IMR-90 (cell line): ENCODE measurements at regions of chr1 and their contacts with region 1.

Region 1: DNA sequence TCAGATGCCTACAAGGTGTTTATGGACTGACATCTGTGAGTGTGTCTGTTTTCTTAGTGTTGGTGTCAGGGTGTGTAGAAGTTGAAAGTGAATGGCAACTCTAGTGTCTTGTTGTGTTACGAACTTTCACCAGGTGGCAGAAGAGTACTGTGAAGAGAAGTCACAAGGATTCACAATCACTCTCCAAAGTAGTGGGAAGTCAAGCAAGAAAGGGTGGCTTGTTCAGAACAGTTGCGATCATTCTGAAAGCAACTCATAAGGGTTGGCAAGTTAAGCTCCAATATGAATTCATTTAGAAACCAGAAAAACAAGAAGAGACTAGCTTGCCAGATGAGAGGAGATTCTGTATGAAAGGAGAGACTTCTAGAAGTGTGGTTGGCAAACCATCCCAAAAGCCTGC is 86.1 kb downstream of the FASLG start:
- DNase-seq: peak; percentile 89
- ATAC-seq: peak; percentile 69
- H3K4me3 ChIP-seq: no peak overlapping the region
- H3K27ac ChIP-seq: no peak overlapping the region
- H3K4me1 ChIP-seq: peaks cover 7% of the 10 kb centered on the region
- H3K27me3 ChIP-seq: no peaks in the 10 kb centered on the region; the same call in 1 of the 2 replicates
- CTCF ChIP-seq: peak; percentile 85
- POLR2A ChIP-seq: peak; percentile 48; the same call in 1 of the 2 replicates
- RAD21 ChIP-seq: peak; percentile 94

Region 2: DNA sequence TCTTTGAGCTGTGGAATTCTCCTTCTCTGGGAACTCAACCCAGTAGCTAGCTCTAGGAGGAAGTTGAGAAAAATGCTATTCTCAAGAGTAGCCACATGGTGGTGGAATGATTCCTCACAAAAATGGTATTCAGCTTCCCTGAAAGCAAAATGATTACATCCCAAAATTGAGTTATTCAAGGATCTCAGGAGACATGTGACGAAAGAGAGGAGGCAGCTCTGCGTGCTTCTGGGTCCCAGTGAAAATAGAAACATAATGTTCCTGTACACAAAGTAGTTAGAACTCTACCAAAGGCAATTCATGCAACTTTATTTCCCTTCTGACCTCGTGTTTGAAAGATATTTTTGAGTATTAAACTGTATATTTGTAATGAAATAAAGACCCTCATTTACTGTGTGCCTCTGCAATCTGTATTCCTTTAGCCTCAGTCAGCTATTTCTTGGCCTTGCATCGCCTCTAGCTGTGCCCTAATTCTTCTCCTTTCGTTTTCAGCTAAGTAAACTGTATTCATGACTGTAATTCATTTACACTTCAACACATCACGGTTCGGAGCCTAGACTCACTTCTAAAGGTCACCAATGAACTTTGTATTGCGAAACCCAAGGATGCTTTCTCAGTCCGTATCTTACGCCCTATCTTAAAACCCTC is 81.2 kb after region 1 on chr1:
- CTCF ChIA-PET with region 1: interaction called, 18 read pairs
- POLR2A ChIA-PET with region 1: no interaction called
- dilution Hi-C with region 1: no loop called
- in situ Hi-C with region 1: loop called (anchors 5 kb)
- intact Hi-C with region 1: loop called (anchors 1 kb)
- DNase-seq: peak; percentile 95
- ATAC-seq: peak; percentile 82
- H3K4me3 ChIP-seq: no peak overlapping the region
- H3K27ac ChIP-seq: peak overlapping the region; percentile 76
- H3K4me1 ChIP-seq: peaks cover 11% of the 10 kb centered on the region
- H3K27me3 ChIP-seq: no peaks in the 10 kb centered on the region
- CTCF ChIP-seq: peak; percentile 81
- POLR2A ChIP-seq: peak; percentile 27; the same call in 1 of the 2 replicates
- RAD21 ChIP-seq: peak; percentile 94

Region 3: DNA sequence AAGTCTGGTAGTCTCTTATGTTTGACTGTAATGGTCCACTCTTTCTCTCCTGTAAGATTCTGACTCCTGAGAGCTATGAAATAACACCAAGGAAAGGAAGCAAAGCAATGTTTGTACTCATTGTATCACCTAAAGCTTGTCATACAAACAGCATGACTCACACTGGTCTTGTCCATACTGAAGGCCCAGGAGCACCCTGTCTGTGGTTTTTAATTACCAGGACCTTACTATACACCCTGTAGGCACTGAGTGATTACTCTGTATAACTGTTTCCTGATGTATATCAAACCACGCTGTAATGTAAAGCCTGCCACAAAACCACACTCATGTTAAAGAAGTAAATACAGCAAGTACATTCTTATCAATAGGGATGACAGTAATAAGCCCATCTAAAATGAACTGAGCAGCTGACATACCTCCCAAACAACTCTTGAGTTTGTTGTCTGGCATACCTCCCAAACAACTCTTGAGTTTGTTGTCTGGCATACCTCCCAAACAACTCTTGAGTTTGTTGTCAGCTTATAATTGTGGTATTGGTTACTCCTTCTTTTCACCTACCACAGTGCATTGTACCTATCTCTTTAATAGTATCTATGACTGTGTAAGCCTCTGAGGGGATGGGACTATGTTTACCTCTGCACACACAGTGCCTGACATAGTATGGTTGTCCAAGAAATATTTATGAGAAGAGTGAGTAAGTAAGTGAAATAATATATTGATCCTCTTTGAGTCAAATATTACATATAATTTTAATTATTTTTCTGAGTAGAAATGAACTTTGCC is 317.3 kb after region 1 on chr1:
- CTCF ChIA-PET with region 1: no interaction called
- POLR2A ChIA-PET with region 1: no interaction called
- dilution Hi-C with region 1: no loop called
- in situ Hi-C with region 1: no loop called
- intact Hi-C with region 1: loop called (anchors 5 kb)
- DNase-seq: peak; percentile 80
- ATAC-seq: peak; percentile 80
- H3K4me3 ChIP-seq: no peak overlapping the region
- H3K27ac ChIP-seq: no peak overlapping the region
- H3K4me1 ChIP-seq: peaks cover 8% of the 10 kb centered on the region; the same call in 1 of the 2 replicates
- H3K27me3 ChIP-seq: no peaks in the 10 kb centered on the region
- CTCF ChIP-seq: no peak
- POLR2A ChIP-seq: no peak
- RAD21 ChIP-seq: no peak

Region 4: GRCh38 chr1:173202430-173203145 is 457.6 kb after region 1 on chr1:
- CTCF ChIA-PET with region 1: interaction called, 12 read pairs
- POLR2A ChIA-PET with region 1: interaction called, 3 read pairs
- dilution Hi-C with region 1: no loop called
- in situ Hi-C with region 1: loop called (anchors 5 kb)
- intact Hi-C with region 1: loop called (anchors 1 kb)
- DNase-seq: peak; percentile 95
- ATAC-seq: peak; percentile 68
- H3K4me3 ChIP-seq: no peak overlapping the region
- H3K27ac ChIP-seq: peak overlapping the region; percentile 36; the same call in 1 of the 2 replicates
- H3K4me1 ChIP-seq: peaks cover 14% of the 10 kb centered on the region
- H3K27me3 ChIP-seq: no peaks in the 10 kb centered on the region
- CTCF ChIP-seq: peak; percentile 87
- POLR2A ChIP-seq: no peak; the same call in 1 of the 2 replicates
- RAD21 ChIP-seq: peak; percentile 94

Region 5: DNA sequence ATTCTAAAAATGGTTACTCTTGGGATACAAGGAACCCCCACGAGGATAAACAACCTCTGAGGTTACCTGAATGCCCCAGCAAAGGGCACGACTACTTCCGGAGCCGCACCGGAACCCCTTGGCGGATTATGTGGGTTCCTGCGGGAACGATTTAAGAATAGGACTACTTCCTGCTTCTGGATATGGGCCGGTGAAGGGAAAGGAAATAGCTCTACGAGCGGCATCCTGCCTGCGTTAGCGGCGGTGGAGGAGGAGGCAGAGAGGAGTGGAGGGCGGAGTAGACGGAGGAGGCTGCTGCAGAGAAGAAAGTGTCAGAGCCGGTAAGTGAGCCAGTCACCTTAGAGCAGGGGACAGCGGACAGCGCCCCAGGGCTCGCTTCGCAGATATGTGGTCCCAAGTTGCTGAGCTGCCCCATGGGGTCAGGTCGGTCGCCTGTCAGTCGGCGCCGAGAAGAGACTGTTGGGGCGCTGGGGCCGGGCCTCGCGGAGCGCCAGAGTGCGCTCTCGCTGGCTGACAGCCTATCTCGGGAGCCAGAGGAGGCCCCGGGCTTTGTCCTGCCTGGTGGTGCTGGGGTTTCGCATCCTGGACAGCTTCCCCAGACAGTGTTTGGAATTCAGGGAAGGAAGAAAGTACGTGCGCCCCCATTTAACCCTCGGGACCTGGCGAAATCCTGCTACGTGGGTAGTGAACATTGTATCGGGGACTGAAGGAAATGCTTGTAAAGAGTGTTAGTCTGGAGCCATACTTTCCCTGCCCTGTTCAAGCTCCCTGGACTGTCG is 969.9 kb after region 1 on chr1 and contains the start of gene KLHL20:
- CTCF ChIA-PET with region 1: no interaction called
- POLR2A ChIA-PET with region 1: no interaction called
- dilution Hi-C with region 1: no loop called
- in situ Hi-C with region 1: no loop called
- intact Hi-C with region 1: loop called (anchors 10 kb)
- DNase-seq: peak; percentile 90
- ATAC-seq: peak; percentile 97
- H3K4me3 ChIP-seq: peak within 1 kb of the TSS; percentile 76
- H3K27ac ChIP-seq: peak within 1 kb of the TSS; percentile 85
- H3K4me1 ChIP-seq: no peaks in the 10 kb centered on the region
- H3K27me3 ChIP-seq: peaks cover 4% of the 10 kb centered on the region; the same call in 1 of the 2 replicates
- CTCF ChIP-seq: 0 out of 2 replicates have a peak, but pooled peaks have one; percentile 6
- POLR2A ChIP-seq: peak; percentile 65
- RAD21 ChIP-seq: no peak
- total RNA-seq, gene KLHL20: 23.3 and 25.8 TPM in 2 replicates

Region 6: GRCh38 chr1:173937062-173937461 is 1192.0 kb after region 1 on chr1:
- CTCF ChIA-PET with region 1: no interaction called
- POLR2A ChIA-PET with region 1: no interaction called
- dilution Hi-C with region 1: no loop called
- in situ Hi-C with region 1: loop called (anchors 25 kb)
- intact Hi-C with region 1: loop called (anchors 10 kb)
- DNase-seq: no peak
- ATAC-seq: no peak
- H3K4me3 ChIP-seq: no peak overlapping the region
- H3K27ac ChIP-seq: no peak overlapping the region
- H3K4me1 ChIP-seq: no peaks in the 10 kb centered on the region
- H3K27me3 ChIP-seq: no peaks in the 10 kb centered on the region
- CTCF ChIP-seq: no peak
- POLR2A ChIP-seq: no peak
- RAD21 ChIP-seq: no peak

Region 7: GRCh38 chr1:174743654-174744561 is 1998.9 kb after region 1 on chr1:
- CTCF ChIA-PET with region 1: no interaction called
- POLR2A ChIA-PET with region 1: no interaction called
- dilution Hi-C with region 1: no loop called
- in situ Hi-C with region 1: loop called (anchors 25 kb)
- intact Hi-C with region 1: loop called (anchors 10 kb)
- DNase-seq: peak; percentile 63
- ATAC-seq: peak; percentile 51
- H3K4me3 ChIP-seq: no peak overlapping the region
- H3K27ac ChIP-seq: no peak overlapping the region
- H3K4me1 ChIP-seq: no peaks in the 10 kb centered on the region
- H3K27me3 ChIP-seq: no peaks in the 10 kb centered on the region
- CTCF ChIP-seq: peak; percentile 81
- POLR2A ChIP-seq: no peak
- RAD21 ChIP-seq: peak; percentile 72